CD8-positive, alpha-beta T cell (primary cell): ENCODE measurements at regions of chr10 and their contacts with region 1.

Region 1: GRCh38 chr10:125982260-125982948 is 86.0 kb downstream of the FANK1 start:
- DNase-seq: peak in 4 of 9 experiments; percentile 10 to 64 (median 48)
- ATAC-seq: no peak
- H3K4me3 ChIP-seq: no peak overlapping the region
- H3K4me3 Mint-ChIP-seq: no peak overlapping the region
- H3K27ac ChIP-seq: no peak overlapping the region
- H3K27ac Mint-ChIP-seq: no peak overlapping the region
- H3K4me1 ChIP-seq: no peaks in the 10 kb centered on the region
- H3K4me1 Mint-ChIP-seq: no peaks in the 10 kb centered on the region
- H3K27me3 ChIP-seq: no peaks in the 10 kb centered on the region
- H3K27me3 Mint-ChIP-seq: peaks cover 9% of the 10 kb centered on the region
- CTCF ChIP-seq: peak; percentile 33

Region 2: GRCh38 chr10:125967533-125967932 is 14.9 kb before region 1 on chr10:
- CTCF ChIA-PET with region 1: no interaction called
- POLR2A ChIA-PET with region 1: no interaction called
- intact Hi-C with region 1: no loop called
- DNase-seq: no peak
- ATAC-seq: no peak
- H3K4me3 ChIP-seq: no peak overlapping the region
- H3K4me3 Mint-ChIP-seq: no peak overlapping the region
- H3K27ac ChIP-seq: no peak overlapping the region
- H3K27ac Mint-ChIP-seq: no peak overlapping the region
- H3K4me1 ChIP-seq: no peaks in the 10 kb centered on the region
- H3K4me1 Mint-ChIP-seq: no peaks in the 10 kb centered on the region
- H3K27me3 ChIP-seq: no peaks in the 10 kb centered on the region
- H3K27me3 Mint-ChIP-seq: no peaks in the 10 kb centered on the region
- CTCF ChIP-seq: no peak

Region 3: DNA sequence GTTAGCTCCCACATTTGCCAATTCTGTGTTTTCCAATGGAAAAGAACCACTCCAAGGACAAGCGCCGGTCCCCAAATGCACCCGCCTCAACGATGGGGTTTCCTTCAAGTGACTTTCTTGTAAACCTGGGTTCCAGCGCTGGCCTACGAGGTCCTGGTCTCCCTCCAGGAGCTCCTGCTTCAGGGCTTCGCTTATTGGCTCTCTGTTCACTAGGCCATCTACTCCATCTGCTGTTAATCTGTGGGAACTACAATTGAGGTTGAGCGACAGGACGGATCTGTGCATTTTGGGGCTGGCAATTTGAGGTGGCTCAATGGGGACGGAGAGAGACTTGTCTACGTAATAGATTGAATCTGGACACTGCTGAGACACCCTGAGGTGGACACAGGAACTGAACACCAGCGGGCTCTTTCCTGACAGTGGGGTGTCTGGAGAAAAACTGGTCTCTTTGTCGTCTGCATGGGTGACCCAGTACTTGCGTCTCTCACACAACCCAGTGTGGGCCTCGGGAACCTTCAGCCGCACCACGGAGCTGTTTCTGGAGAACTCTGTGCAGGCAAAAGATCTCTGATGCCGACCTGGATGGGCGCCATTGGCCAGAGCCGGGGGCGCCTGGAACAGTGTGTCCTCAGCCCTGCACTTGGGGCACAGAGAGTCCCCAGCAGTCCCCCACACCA is 521.8 kb after region 1 on chr10:
- CTCF ChIA-PET with region 1: no interaction called
- POLR2A ChIA-PET with region 1: no interaction called
- intact Hi-C with region 1: loop called in 1 of 2 experiments (anchors 5 kb)
- DNase-seq: peak in 2 of 9 experiments; percentile 29 to 33
- ATAC-seq: no peak
- H3K4me3 ChIP-seq: no peak overlapping the region
- H3K4me3 Mint-ChIP-seq: no peak overlapping the region
- H3K27ac ChIP-seq: no peak overlapping the region
- H3K27ac Mint-ChIP-seq: no peak overlapping the region
- H3K4me1 ChIP-seq: no peaks in the 10 kb centered on the region
- H3K4me1 Mint-ChIP-seq: no peaks in the 10 kb centered on the region
- H3K27me3 ChIP-seq: no peaks in the 10 kb centered on the region
- H3K27me3 Mint-ChIP-seq: no peaks in the 10 kb centered on the region
- CTCF ChIP-seq: no peak

Region 4: DNA sequence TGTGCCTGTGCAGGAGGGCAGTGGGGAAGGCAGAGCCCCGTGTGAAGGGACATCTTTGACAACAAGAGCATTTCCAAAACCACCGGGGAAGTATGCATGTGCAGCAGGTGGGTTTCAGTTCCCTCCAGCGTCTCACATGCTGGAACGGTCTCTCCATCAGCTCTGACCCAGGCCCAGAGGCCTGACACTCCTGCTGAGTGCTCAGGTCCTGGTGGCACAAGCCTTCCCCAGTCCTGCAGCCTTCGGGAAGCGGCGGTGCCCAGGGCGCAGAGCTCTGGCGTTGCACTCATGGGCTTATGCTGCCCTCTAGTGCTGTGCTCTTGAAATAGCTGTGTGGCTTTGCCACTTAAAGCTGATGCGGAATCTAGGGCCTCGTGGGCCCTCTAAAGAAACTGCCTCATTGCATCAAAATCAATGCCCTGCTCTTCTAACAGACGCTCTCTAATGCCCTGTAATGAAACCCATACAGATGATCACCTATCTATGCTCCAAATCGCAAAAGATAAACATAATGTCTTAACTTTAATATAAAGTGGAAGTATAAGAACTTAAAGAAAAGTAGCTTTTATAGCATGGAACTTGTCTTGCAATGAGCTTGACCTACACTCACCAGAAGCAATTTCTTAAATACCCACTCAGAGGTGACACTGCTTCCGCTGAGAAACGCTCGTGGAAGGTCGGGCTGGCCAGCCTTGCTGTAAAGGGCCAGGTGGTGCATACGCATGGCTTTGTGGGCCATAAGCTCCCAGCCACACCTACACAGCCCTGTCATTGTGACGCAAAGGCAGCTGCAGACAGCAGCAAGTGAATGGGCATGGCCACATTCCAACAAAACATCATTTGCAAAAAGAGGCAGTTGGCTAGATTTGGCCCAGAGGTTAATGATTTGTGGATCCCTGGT is 1871.7 kb after region 1 on chr10:
- CTCF ChIA-PET with region 1: interaction called, 7 read pairs
- POLR2A ChIA-PET with region 1: no interaction called
- intact Hi-C with region 1: loop called in 1 of 2 experiments (anchors 1 kb)
- DNase-seq: peak in 8 of 9 experiments; percentile 15 to 62 (median 41)
- ATAC-seq: peak; percentile 55
- H3K4me3 ChIP-seq: no peak overlapping the region
- H3K4me3 Mint-ChIP-seq: no peak overlapping the region
- H3K27ac ChIP-seq: no peak overlapping the region
- H3K27ac Mint-ChIP-seq: no peak overlapping the region
- H3K4me1 ChIP-seq: no peaks in the 10 kb centered on the region
- H3K4me1 Mint-ChIP-seq: peaks cover 6% of the 10 kb centered on the region
- H3K27me3 ChIP-seq: no peaks in the 10 kb centered on the region
- H3K27me3 Mint-ChIP-seq: peaks cover 10% of the 10 kb centered on the region
- CTCF ChIP-seq: peak; percentile 66